Activated CD4-positive, alpha-beta T cell treated with anti-CD3 and anti-CD28 coated beads for 36 hours (primary cell): ENCODE measurements at regions of chr19 and their contacts with region 1.

Region 1: DNA sequence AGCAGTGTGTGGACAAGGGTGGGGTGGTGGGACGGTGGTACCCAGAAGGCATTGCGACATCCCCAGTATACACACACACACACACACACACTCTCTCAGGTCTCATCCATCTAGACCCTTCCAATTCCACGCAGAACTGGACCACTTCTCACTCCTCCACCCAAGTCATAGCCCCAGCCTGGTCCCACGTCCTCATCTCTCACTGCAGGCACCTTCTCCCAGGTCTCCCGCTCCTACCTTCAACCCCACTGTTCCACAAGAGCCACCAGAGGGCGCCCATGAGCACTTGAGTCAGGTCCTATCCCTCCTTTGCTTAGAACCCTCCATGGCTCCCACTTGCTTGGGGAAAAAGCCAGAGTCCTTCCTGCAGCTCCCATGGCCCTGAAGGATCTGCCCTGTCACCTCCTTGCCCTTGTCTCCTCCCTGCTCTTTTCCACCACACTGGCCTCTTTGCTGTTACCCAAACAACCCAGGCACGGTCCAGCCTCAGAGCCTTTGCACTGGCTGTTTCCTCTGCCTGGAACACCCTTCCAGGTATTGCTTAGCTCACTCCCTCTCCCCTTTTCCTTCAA is 62.6 kb downstream of the IER2 start:
- DNase-seq: peak; percentile 90
- ATAC-seq: peak; percentile 51
- H3K4me3 Mint-ChIP-seq: no peak overlapping the region
- H3K27ac Mint-ChIP-seq: no peak overlapping the region
- H3K4me1 Mint-ChIP-seq: peaks cover 32% of the 10 kb centered on the region
- H3K27me3 Mint-ChIP-seq: no peaks in the 10 kb centered on the region

Region 2: GRCh38 chr19:13155472-13156359 is 57.1 kb before region 1 on chr19:
- CTCF ChIA-PET with region 1: no interaction called
- POLR2A ChIA-PET with region 1: interaction called, 3 read pairs
- intact Hi-C with region 1: loop called (anchors 1 to 2 kb)
- DNase-seq: peak; percentile 82
- ATAC-seq: peak; percentile 1
- H3K4me3 Mint-ChIP-seq: peak overlapping the region; percentile 87
- H3K27ac Mint-ChIP-seq: peak overlapping the region; percentile 100
- H3K4me1 Mint-ChIP-seq: peaks cover 33% of the 10 kb centered on the region
- H3K27me3 Mint-ChIP-seq: no peaks in the 10 kb centered on the region

Region 3: DNA sequence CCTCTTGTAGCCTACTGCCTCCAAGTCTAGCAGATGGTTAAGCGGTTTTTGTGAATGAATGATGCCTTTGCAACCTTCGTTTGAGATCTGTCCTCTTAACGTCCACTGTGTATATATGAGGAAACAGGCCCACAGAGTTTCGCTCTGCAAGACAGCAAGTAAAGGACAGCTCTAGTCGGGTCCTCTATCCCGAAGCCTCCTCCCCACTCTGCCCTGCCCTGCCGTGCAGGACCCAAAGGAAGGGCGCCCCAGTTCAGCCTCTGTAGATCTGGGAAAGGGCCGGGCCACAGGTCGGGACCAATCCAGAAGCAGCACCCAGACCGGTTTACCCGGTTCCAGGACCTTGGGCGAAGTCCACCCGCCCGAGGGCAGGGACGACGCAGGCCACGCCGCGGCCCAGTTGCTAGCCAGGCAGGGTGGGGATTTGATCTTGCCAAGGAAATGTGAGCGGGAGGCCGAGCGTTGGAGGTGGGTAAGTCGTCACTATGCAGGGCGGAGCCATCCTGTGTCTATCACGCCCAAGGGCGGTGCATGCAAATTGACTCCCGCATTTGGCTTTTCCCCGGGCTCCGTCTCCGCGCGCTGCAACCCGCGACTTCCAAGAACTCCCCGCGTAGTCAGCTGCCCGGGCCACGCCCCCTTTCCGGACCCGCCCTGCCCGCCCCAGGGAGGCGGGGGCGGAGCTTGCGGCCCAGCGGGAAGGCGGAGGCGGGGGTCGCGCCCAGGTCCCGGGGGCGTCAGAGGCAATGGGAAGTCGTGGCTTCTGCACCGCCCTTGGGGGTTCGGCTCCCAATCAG is 50.1 kb before region 1 on chr19:
- CTCF ChIA-PET with region 1: interaction called, 4 read pairs
- POLR2A ChIA-PET with region 1: interaction called, 3 read pairs
- intact Hi-C with region 1: loop called (anchors 1 to 2 kb)
- DNase-seq: peak; percentile 96
- ATAC-seq: peak; percentile 56
- H3K4me3 Mint-ChIP-seq: peak overlapping the region; percentile 80
- H3K27ac Mint-ChIP-seq: peak overlapping the region; percentile 94
- H3K4me1 Mint-ChIP-seq: peaks cover 64% of the 10 kb centered on the region
- H3K27me3 Mint-ChIP-seq: no peaks in the 10 kb centered on the region

Region 4: DNA sequence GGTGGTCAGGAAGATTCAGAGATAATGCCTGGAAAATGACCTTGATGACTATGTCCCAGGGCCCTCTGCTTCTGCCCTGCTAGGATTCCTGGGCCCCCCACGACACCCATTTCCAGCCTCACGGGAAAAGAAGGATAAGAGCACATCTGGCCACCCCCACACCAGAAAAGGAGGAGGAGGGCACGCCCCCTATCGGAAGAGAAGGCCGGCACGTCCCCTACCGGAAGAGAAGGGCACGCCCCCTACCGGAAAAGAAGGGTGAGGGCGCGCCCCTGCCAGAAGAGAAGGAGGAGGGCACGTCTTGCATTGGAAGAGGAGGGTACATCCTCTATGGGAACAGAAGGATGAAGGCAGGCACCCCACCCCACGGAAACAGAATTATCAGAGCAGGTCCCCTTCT is 21.7 kb after region 1 on chr19:
- CTCF ChIA-PET with region 1: interaction called, 8 read pairs
- POLR2A ChIA-PET with region 1: interaction called, 3 read pairs
- intact Hi-C with region 1: loop called in 1 of 2 experiments (anchors 2 kb)
- DNase-seq: peak; percentile 86
- ATAC-seq: peak; percentile 95
- H3K4me3 Mint-ChIP-seq: peak overlapping the region; percentile 47
- H3K27ac Mint-ChIP-seq: peak overlapping the region; percentile 71
- H3K4me1 Mint-ChIP-seq: peaks cover 14% of the 10 kb centered on the region
- H3K27me3 Mint-ChIP-seq: no peaks in the 10 kb centered on the region